HEK293 (cell line): ENCODE measurements at regions of chr6 and their contacts with region 1.

Region 1: DNA sequence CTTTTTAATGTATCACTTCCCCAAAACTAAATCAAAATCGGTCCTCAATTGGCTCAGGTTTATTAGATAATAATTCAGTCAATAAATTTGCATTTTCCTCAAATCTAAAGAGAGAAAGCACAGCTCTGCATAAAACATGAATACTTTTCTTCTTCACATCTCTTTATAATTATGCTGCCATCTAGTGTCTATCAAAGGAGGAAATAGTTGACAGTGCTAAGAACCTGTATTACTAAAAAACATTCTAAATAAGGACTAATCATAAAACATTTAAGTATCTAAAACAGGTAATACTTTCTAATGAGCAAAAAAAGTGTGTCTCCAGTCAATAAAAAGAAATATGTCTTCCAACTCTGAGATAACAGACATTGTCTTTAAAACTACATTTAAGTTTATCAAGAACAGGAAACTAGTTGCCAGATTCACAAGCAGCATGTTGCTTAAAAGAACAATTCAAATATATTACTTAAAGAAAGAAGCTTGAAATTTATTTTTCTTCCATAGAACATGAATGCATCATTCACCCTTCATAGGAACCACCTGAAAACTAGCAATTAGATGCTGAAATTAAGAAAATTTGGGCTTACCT is 56.5 kb upstream of the DST start:
- H3K4me3 ChIP-seq: no peak overlapping the region
- H3K27ac ChIP-seq: no peak overlapping the region
- H3K4me1 ChIP-seq: no peaks in the 10 kb centered on the region
- CTCF ChIP-seq: no peak

Region 2: GRCh38 chr6:56235245-56235644 is 463.9 kb before region 1 on chr6:
- CTCF ChIA-PET with region 1: no interaction called
- POLR2A ChIA-PET with region 1: no interaction called
- H3K4me3 ChIP-seq: no peak overlapping the region
- H3K27ac ChIP-seq: no peak overlapping the region
- H3K4me1 ChIP-seq: peaks cover 7% of the 10 kb centered on the region
- CTCF ChIP-seq: no peak

Region 3: GRCh38 chr6:56671651-56672461 is 27.3 kb before region 1 on chr6:
- CTCF ChIA-PET with region 1: interaction called, 15 read pairs
- POLR2A ChIA-PET with region 1: no interaction called
- H3K4me3 ChIP-seq: no peak overlapping the region
- H3K27ac ChIP-seq: no peak overlapping the region
- H3K4me1 ChIP-seq: peaks cover 17% of the 10 kb centered on the region
- CTCF ChIP-seq: no peak

Region 4: DNA sequence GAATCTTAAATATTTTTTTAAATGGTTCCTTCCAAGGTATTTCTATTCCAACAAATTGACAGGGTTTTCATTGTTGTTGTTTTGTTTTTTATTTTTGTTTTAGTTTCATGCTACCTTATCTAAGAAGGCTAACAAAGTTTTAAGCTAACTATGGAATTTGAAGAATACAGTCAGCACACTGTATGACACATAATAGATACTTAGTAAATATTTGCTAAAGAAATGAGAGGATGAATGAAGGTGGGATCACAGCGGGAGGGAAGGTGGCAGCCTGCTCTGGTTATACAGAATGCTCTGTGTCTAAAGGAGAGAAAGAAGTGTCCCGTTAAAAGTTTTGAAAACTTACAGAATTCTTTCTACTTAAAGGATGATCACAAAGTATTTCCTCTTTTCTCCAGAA is 12.7 kb before region 1 on chr6:
- CTCF ChIA-PET with region 1: interaction called, 25 read pairs
- POLR2A ChIA-PET with region 1: no interaction called
- H3K4me3 ChIP-seq: no peak overlapping the region
- H3K27ac ChIP-seq: no peak overlapping the region
- H3K4me1 ChIP-seq: peaks cover 34% of the 10 kb centered on the region
- CTCF ChIP-seq: no peak

Region 5: DNA sequence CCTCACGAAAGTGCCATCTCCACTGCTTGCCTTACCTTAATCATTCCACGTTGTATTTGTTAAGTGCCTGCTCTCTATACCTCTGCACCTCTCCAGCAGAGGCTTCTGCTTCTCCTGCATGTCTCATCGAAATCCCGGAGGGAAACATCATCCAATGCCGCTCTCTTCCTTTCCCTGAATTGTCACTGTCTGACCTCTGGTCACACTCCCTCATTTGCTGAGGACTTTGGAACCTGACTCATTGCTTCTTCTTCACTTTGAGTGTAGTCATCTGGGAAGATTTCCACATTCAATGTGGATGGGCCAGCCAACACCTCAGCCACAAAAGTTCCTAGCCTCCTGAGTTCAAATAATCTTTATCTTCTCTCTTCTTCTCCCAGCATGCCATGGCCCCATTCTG is 176.8 kb after region 1 on chr6:
- CTCF ChIA-PET with region 1: no interaction called
- POLR2A ChIA-PET with region 1: no interaction called
- H3K4me3 ChIP-seq: no peak overlapping the region
- H3K27ac ChIP-seq: no peak overlapping the region
- H3K4me1 ChIP-seq: no peaks in the 10 kb centered on the region
- CTCF ChIP-seq: no peak